Activated CD8-positive, alpha-beta T cell treated with anti-CD3 and anti-CD28 coated beads for 36 hours (primary cell): ENCODE measurements at regions of chr11 and their contacts with region 1.

Region 1: GRCh38 chr11:123246749-123247495 is 51.9 kb upstream of the CLMP start:
- DNase-seq: peak; percentile 89
- ATAC-seq: peak; percentile 93
- H3K4me3 Mint-ChIP-seq: no peak overlapping the region
- H3K27ac Mint-ChIP-seq: no peak overlapping the region
- H3K4me1 Mint-ChIP-seq: peaks cover 4% of the 10 kb centered on the region
- H3K27me3 Mint-ChIP-seq: peaks cover 11% of the 10 kb centered on the region
- CTCF ChIP-seq: peak; percentile 98

Region 2: GRCh38 chr11:123103326-123103980 is 143.5 kb before region 1 on chr11:
- CTCF ChIA-PET with region 1: interaction called, 281 read pairs
- POLR2A ChIA-PET with region 1: no interaction called
- intact Hi-C with region 1: no loop called
- DNase-seq: peak; percentile 40
- ATAC-seq: peak; percentile 56
- H3K4me3 Mint-ChIP-seq: no peak overlapping the region
- H3K27ac Mint-ChIP-seq: no peak overlapping the region
- H3K4me1 Mint-ChIP-seq: peaks cover 18% of the 10 kb centered on the region
- H3K27me3 Mint-ChIP-seq: no peaks in the 10 kb centered on the region
- CTCF ChIP-seq: peak; percentile 64

Region 3: GRCh38 chr11:123122341-123122740 is 124.6 kb before region 1 on chr11:
- CTCF ChIA-PET with region 1: interaction called, 19 read pairs
- POLR2A ChIA-PET with region 1: no interaction called
- intact Hi-C with region 1: no loop called
- DNase-seq: no peak
- ATAC-seq: no peak
- H3K4me3 Mint-ChIP-seq: no peak overlapping the region
- H3K27ac Mint-ChIP-seq: no peak overlapping the region
- H3K4me1 Mint-ChIP-seq: peaks cover 5% of the 10 kb centered on the region
- H3K27me3 Mint-ChIP-seq: peaks cover 1% of the 10 kb centered on the region
- CTCF ChIP-seq: no peak

Region 4: DNA sequence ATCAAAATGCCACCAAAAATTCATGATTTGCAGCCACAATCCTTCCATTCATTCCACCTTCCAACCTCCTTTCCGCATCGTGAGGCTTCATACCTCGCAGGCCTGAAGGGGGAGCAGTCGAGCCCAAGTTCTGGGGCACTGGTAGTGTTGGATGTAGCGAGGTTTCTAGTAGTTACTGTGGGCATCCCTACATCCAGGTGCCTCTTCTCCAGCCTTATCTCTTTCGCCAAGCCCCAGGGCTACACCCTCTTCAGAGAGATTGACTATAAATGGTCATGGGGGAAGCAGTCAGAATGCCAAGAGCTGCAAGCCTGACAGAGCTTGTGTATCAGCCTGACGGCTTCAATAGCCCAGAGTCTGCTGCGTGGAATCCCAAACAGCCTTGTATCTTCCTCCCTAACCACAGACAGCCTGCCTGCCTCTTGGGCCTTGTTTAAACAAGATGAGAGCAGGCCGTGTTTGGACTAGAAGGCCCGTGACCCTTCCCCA is 80.8 kb before region 1 on chr11:
- CTCF ChIA-PET with region 1: interaction called, 53 read pairs
- POLR2A ChIA-PET with region 1: no interaction called
- intact Hi-C with region 1: no loop called
- DNase-seq: peak; percentile 42
- ATAC-seq: no peak
- H3K4me3 Mint-ChIP-seq: no peak overlapping the region
- H3K27ac Mint-ChIP-seq: no peak overlapping the region
- H3K4me1 Mint-ChIP-seq: no peaks in the 10 kb centered on the region
- H3K27me3 Mint-ChIP-seq: peaks cover 2% of the 10 kb centered on the region
- CTCF ChIP-seq: peak; percentile 55

Region 5: GRCh38 chr11:123211149-123211852 is 35.6 kb before region 1 on chr11:
- CTCF ChIA-PET with region 1: interaction called, 11 read pairs
- POLR2A ChIA-PET with region 1: no interaction called
- intact Hi-C with region 1: no loop called
- DNase-seq: no peak
- ATAC-seq: no peak
- H3K4me3 Mint-ChIP-seq: no peak overlapping the region
- H3K27ac Mint-ChIP-seq: no peak overlapping the region
- H3K4me1 Mint-ChIP-seq: no peaks in the 10 kb centered on the region
- H3K27me3 Mint-ChIP-seq: peaks cover 17% of the 10 kb centered on the region
- CTCF ChIP-seq: no peak

Region 6: GRCh38 chr11:123235117-123235655 is 11.7 kb before region 1 on chr11:
- CTCF ChIA-PET with region 1: interaction called, 51 read pairs
- POLR2A ChIA-PET with region 1: no interaction called
- intact Hi-C with region 1: no loop called
- DNase-seq: peak; percentile 60
- ATAC-seq: no peak
- H3K4me3 Mint-ChIP-seq: no peak overlapping the region
- H3K27ac Mint-ChIP-seq: no peak overlapping the region
- H3K4me1 Mint-ChIP-seq: peaks cover 16% of the 10 kb centered on the region
- H3K27me3 Mint-ChIP-seq: no peaks in the 10 kb centered on the region
- CTCF ChIP-seq: no peak

Region 7: GRCh38 chr11:123268118-123268517 is 21.2 kb after region 1 on chr11:
- CTCF ChIA-PET with region 1: interaction called, 115 read pairs
- POLR2A ChIA-PET with region 1: no interaction called
- intact Hi-C with region 1: no loop called
- DNase-seq: no peak
- ATAC-seq: no peak
- H3K4me3 Mint-ChIP-seq: no peak overlapping the region
- H3K27ac Mint-ChIP-seq: no peak overlapping the region
- H3K4me1 Mint-ChIP-seq: no peaks in the 10 kb centered on the region
- H3K27me3 Mint-ChIP-seq: peaks cover 13% of the 10 kb centered on the region
- CTCF ChIP-seq: no peak